ENCODE measurements at regions of chr2 and their contacts with region 1.

Region 1: DNA sequence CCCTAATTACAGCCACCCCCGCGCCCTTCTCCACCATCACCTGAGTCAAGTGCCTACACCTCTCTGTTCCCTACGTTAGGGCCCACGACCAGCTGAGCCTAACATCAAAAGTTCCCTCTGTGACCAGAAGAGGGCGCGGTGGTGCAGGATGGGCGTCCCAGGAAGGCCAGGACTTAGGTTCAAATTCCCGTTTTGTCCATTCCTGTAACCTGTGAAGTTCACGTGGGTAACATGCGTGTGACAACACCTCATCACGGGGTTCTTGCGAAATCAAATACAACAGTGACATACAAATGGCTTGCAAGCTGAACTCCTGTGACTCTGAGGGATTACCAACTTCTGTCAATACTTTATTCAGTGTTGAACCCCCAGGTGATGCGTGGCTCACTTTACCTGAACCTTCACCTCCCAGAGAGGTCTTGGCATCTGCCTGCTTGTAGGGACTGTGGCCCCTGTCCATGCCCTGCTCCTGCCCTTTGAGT is 207.9 kb downstream of the ARL4C start:
- DNase-seq: peak; percentile 52 to 87 (median 73)
- ATAC-seq: no peak
- H3K4me3 ChIP-seq: no peak overlapping the region
- H3K4me3 Mint-ChIP-seq: peak overlapping the region; percentile 9
- H3K27ac ChIP-seq: peak overlapping the region; percentile 94 to 99
- H3K27ac Mint-ChIP-seq: peak overlapping the region; percentile 98
- H3K4me1 ChIP-seq: peaks cover 56% of the 10 kb centered on the region
- H3K4me1 Mint-ChIP-seq: peaks cover 66% of the 10 kb centered on the region
- H3K27me3 ChIP-seq: no peaks in the 10 kb centered on the region
- H3K27me3 Mint-ChIP-seq: no peaks in the 10 kb centered on the region
- CTCF ChIP-seq: peak; percentile 77

Region 2: GRCh38 chr2:234111523-234111922 is 177.5 kb before region 1 on chr2:
- CTCF ChIA-PET with region 1: no interaction called
- POLR2A ChIA-PET with region 1: no interaction called
- intact Hi-C with region 1: no loop called
- DNase-seq: no peak
- ATAC-seq: no peak
- H3K4me3 ChIP-seq: no peak overlapping the region
- H3K4me3 Mint-ChIP-seq: no peak overlapping the region
- H3K27ac ChIP-seq: no peak overlapping the region
- H3K27ac Mint-ChIP-seq: no peak overlapping the region
- H3K4me1 ChIP-seq: no peaks in the 10 kb centered on the region
- H3K4me1 Mint-ChIP-seq: no peaks in the 10 kb centered on the region
- H3K27me3 ChIP-seq: no peaks in the 10 kb centered on the region
- H3K27me3 Mint-ChIP-seq: no peaks in the 10 kb centered on the region
- CTCF ChIP-seq: no peak

Region 3: DNA sequence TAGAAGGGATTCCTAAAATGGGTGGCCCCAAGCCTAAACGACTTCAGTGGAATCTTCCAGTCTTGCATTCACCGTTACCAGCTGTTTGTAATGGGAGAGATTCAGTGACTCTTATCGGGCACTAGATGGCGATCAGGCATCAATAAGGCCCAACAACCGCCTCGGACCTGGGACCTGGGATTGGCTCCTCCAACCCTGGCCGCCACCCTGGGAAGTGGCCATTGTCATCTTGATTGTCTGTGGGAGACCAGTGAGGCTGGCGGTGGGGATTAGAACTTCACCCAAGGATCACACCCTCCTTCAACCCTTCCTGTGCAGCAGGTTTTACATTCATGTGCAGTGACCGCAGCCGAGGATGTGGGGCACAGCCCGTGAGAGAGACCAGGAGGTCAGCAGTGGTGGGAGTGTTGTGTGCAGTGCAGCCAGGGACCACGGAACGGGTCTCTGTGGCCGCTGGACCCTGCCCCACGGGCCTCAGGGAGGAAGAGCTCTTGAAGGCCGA is 153.2 kb before region 1 on chr2:
- CTCF ChIA-PET with region 1: interaction called, 25 read pairs
- POLR2A ChIA-PET with region 1: interaction called, 3 read pairs
- intact Hi-C with region 1: loop called (anchors 1 to 5 kb)
- DNase-seq: peak; percentile 16 to 77 (median 48)
- ATAC-seq: peak; percentile 56
- H3K4me3 ChIP-seq: no peak overlapping the region
- H3K4me3 Mint-ChIP-seq: no peak overlapping the region
- H3K27ac ChIP-seq: no peak overlapping the region
- H3K27ac Mint-ChIP-seq: peak overlapping the region; percentile 64
- H3K4me1 ChIP-seq: peaks cover 25% of the 10 kb centered on the region
- H3K4me1 Mint-ChIP-seq: peaks cover 30% of the 10 kb centered on the region
- H3K27me3 ChIP-seq: no peaks in the 10 kb centered on the region
- H3K27me3 Mint-ChIP-seq: no peaks in the 10 kb centered on the region
- CTCF ChIP-seq: peak; percentile 62

Region 4: DNA sequence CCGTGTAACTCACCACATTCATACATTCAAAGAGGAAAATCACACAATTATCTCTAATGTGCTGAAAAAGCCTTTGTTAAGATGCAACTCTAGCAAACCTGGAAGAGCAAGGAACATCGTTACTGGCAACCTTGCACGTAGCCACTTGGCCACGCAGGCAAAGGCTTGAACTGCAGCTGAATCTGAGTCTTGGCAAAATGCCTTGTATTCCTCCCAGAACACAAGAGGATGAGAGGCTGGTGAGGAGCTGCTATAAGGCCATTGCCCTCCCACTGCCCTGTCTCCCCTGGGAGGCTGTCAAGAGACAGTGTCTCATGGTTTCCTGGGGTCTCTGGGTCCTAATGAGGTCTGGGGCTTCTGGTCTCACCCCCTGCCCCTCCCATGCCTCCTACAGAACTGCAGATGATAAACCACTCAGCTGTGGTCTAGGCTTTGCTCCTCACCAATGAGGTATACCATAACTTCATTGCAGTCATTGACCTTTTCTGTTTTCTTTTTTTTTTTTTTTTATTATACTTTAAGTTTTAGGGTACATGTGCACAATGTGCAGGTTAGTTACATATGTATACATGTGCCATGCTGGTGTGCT is 97.1 kb before region 1 on chr2:
- CTCF ChIA-PET with region 1: no interaction called
- POLR2A ChIA-PET with region 1: no interaction called
- intact Hi-C with region 1: no loop called
- DNase-seq: no peak
- ATAC-seq: no peak
- H3K4me3 ChIP-seq: no peak overlapping the region
- H3K4me3 Mint-ChIP-seq: no peak overlapping the region
- H3K27ac ChIP-seq: no peak overlapping the region
- H3K27ac Mint-ChIP-seq: no peak overlapping the region
- H3K4me1 ChIP-seq: no peaks in the 10 kb centered on the region
- H3K4me1 Mint-ChIP-seq: peaks cover 3% of the 10 kb centered on the region
- H3K27me3 ChIP-seq: no peaks in the 10 kb centered on the region
- H3K27me3 Mint-ChIP-seq: peaks cover 2% of the 10 kb centered on the region
- CTCF ChIP-seq: no peak

Region 5: GRCh38 chr2:234300932-234301823 is 12.2 kb after region 1 on chr2:
- CTCF ChIA-PET with region 1: interaction called, 14 read pairs
- POLR2A ChIA-PET with region 1: interaction called, 5 read pairs
- intact Hi-C with region 1: no loop called
- DNase-seq: peak in 1 of 9 experiments; percentile 23
- ATAC-seq: no peak
- H3K4me3 ChIP-seq: no peak overlapping the region
- H3K4me3 Mint-ChIP-seq: no peak overlapping the region
- H3K27ac ChIP-seq: no peak overlapping the region
- H3K27ac Mint-ChIP-seq: peak overlapping the region; percentile 73
- H3K4me1 ChIP-seq: peaks cover 41% of the 10 kb centered on the region
- H3K4me1 Mint-ChIP-seq: peaks cover 51% of the 10 kb centered on the region
- H3K27me3 ChIP-seq: no peaks in the 10 kb centered on the region
- H3K27me3 Mint-ChIP-seq: no peaks in the 10 kb centered on the region
- CTCF ChIP-seq: no peak

Region 6: GRCh38 chr2:234348081-234348480 is 59.1 kb after region 1 on chr2:
- CTCF ChIA-PET with region 1: no interaction called
- POLR2A ChIA-PET with region 1: no interaction called
- intact Hi-C with region 1: no loop called
- DNase-seq: peak in 2 of 9 experiments; percentile 19 to 38
- ATAC-seq: no peak
- H3K4me3 ChIP-seq: no peak overlapping the region
- H3K4me3 Mint-ChIP-seq: no peak overlapping the region
- H3K27ac ChIP-seq: no peak overlapping the region
- H3K27ac Mint-ChIP-seq: no peak overlapping the region
- H3K4me1 ChIP-seq: peaks cover 11% of the 10 kb centered on the region
- H3K4me1 Mint-ChIP-seq: peaks cover 32% of the 10 kb centered on the region
- H3K27me3 ChIP-seq: no peaks in the 10 kb centered on the region
- H3K27me3 Mint-ChIP-seq: no peaks in the 10 kb centered on the region
- CTCF ChIP-seq: no peak

Region 7: GRCh38 chr2:234368861-234369261 is 79.8 kb after region 1 on chr2:
- CTCF ChIA-PET with region 1: interaction called, 16 read pairs
- POLR2A ChIA-PET with region 1: interaction called, 5 read pairs
- intact Hi-C with region 1: loop called (anchors 2 to 5 kb)
- DNase-seq: peak in 8 of 9 experiments; percentile 31 to 70 (median 57)
- ATAC-seq: peak; percentile 74
- H3K4me3 ChIP-seq: no peak overlapping the region
- H3K4me3 Mint-ChIP-seq: peak overlapping the region; percentile 7
- H3K27ac ChIP-seq: peak overlapping the region in 1 of 2 experiments; percentile 54
- H3K27ac Mint-ChIP-seq: peak overlapping the region; percentile 87
- H3K4me1 ChIP-seq: peaks cover 73% of the 10 kb centered on the region
- H3K4me1 Mint-ChIP-seq: peaks cover 77% of the 10 kb centered on the region
- H3K27me3 ChIP-seq: no peaks in the 10 kb centered on the region
- H3K27me3 Mint-ChIP-seq: no peaks in the 10 kb centered on the region
- CTCF ChIP-seq: no peak

Region 8: GRCh38 chr2:234451852-234452625 is 163.0 kb after region 1 on chr2:
- CTCF ChIA-PET with region 1: interaction called, 18 read pairs
- POLR2A ChIA-PET with region 1: interaction called, 38 read pairs
- intact Hi-C with region 1: loop called (anchors 2 to 5 kb)
- DNase-seq: peak in 2 of 9 experiments; percentile 29 to 55
- ATAC-seq: peak; percentile 14
- H3K4me3 ChIP-seq: peak overlapping the region; percentile 42 to 81
- H3K4me3 Mint-ChIP-seq: peak overlapping the region; percentile 83
- H3K27ac ChIP-seq: peak overlapping the region; percentile 55 to 91
- H3K27ac Mint-ChIP-seq: peak overlapping the region; percentile 91
- H3K4me1 ChIP-seq: peaks cover 73% of the 10 kb centered on the region
- H3K4me1 Mint-ChIP-seq: peaks cover 79% of the 10 kb centered on the region
- H3K27me3 ChIP-seq: no peaks in the 10 kb centered on the region
- H3K27me3 Mint-ChIP-seq: no peaks in the 10 kb centered on the region
- CTCF ChIP-seq: no peak

Region 9: GRCh38 chr2:234500394-234501006 is 211.5 kb after region 1 on chr2:
- CTCF ChIA-PET with region 1: interaction called, 32 read pairs
- POLR2A ChIA-PET with region 1: interaction called, 62 read pairs
- intact Hi-C with region 1: loop called (anchors 1 to 2 kb)
- DNase-seq: peak; percentile 45 to 90 (median 76)
- ATAC-seq: peak; percentile 45
- H3K4me3 ChIP-seq: no peak overlapping the region
- H3K4me3 Mint-ChIP-seq: no peak overlapping the region
- H3K27ac ChIP-seq: no peak overlapping the region
- H3K27ac Mint-ChIP-seq: peak overlapping the region; percentile 92
- H3K4me1 ChIP-seq: peaks cover 32% of the 10 kb centered on the region
- H3K4me1 Mint-ChIP-seq: peaks cover 27% of the 10 kb centered on the region
- H3K27me3 ChIP-seq: no peaks in the 10 kb centered on the region
- H3K27me3 Mint-ChIP-seq: no peaks in the 10 kb centered on the region
- CTCF ChIP-seq: peak; percentile 77

Region 10: GRCh38 chr2:234705108-234705507 is 416.1 kb after region 1 on chr2:
- CTCF ChIA-PET with region 1: no interaction called
- POLR2A ChIA-PET with region 1: no interaction called
- intact Hi-C with region 1: no loop called
- DNase-seq: no peak
- ATAC-seq: no peak
- H3K4me3 ChIP-seq: no peak overlapping the region
- H3K4me3 Mint-ChIP-seq: no peak overlapping the region
- H3K27ac ChIP-seq: no peak overlapping the region
- H3K27ac Mint-ChIP-seq: no peak overlapping the region
- H3K4me1 ChIP-seq: no peaks in the 10 kb centered on the region
- H3K4me1 Mint-ChIP-seq: no peaks in the 10 kb centered on the region
- H3K27me3 ChIP-seq: no peaks in the 10 kb centered on the region
- H3K27me3 Mint-ChIP-seq: peaks cover 27% of the 10 kb centered on the region
- CTCF ChIP-seq: no peak